ENCODE measurements at regions of chr11 and their contacts with region 1.

Region 1: GRCh38 chr11:19311308-19312030 is 70.7 kb upstream of the E2F8 start:
- DNase-seq: peak; percentile 75
- H3K4me3 ChIP-seq: no peak overlapping the region
- H3K27ac ChIP-seq: no peak overlapping the region
- H3K4me1 ChIP-seq: peaks cover 0 to 6% (median 4%) of the 10 kb centered on the region in 4 donors
- H3K27me3 ChIP-seq: no peaks in the 10 kb centered on the region
- CTCF ChIP-seq: peak; percentile 21 to 77 (median 70)
- EP300 ChIP-seq: no peak
- POLR2A ChIP-seq: no peak

Region 2: GRCh38 chr11:19145319-19145718 is 166.2 kb before region 1 on chr11:
- intact Hi-C with region 1: no loop called
- DNase-seq: no peak
- H3K4me3 ChIP-seq: no peak overlapping the region
- H3K27ac ChIP-seq: no peak overlapping the region
- H3K4me1 ChIP-seq: no peaks in the 10 kb centered on the region
- H3K27me3 ChIP-seq: no peaks in the 10 kb centered on the region
- CTCF ChIP-seq: no peak
- EP300 ChIP-seq: no peak
- POLR2A ChIP-seq: no peak

Region 3: GRCh38 chr11:19580646-19581045 is 269.2 kb after region 1 on chr11:
- intact Hi-C with region 1: no loop called
- DNase-seq: no peak
- H3K4me3 ChIP-seq: no peak overlapping the region
- H3K27ac ChIP-seq: peak overlapping the region in 3 of 4 donors; percentile 92 to 94 (median 93)
- H3K4me1 ChIP-seq: peaks cover 0 to 49% (median 44%) of the 10 kb centered on the region in 4 donors
- H3K27me3 ChIP-seq: no peaks in the 10 kb centered on the region
- CTCF ChIP-seq: no peak
- EP300 ChIP-seq: no peak
- POLR2A ChIP-seq: no peak

Region 4: GRCh38 chr11:19919050-19919561 is 607.6 kb after region 1 on chr11:
- intact Hi-C with region 1: loop called (anchors 10 kb)
- DNase-seq: peak; percentile 85
- H3K4me3 ChIP-seq: no peak overlapping the region
- H3K27ac ChIP-seq: peak overlapping the region; percentile 54 to 78 (median 68)
- H3K4me1 ChIP-seq: peaks cover 0 to 62% (median 39%) of the 10 kb centered on the region in 4 donors
- H3K27me3 ChIP-seq: no peaks in the 10 kb centered on the region
- CTCF ChIP-seq: no peak
- EP300 ChIP-seq: peak in 1 of 4 donors; percentile 49
- POLR2A ChIP-seq: no peak

Measured in sigmoid colon (tissue), 7 donors.